Gastrocnemius medialis (tissue), 4 donors: ENCODE measurements at regions of chr7 and their contacts with region 1.

Region 1: DNA sequence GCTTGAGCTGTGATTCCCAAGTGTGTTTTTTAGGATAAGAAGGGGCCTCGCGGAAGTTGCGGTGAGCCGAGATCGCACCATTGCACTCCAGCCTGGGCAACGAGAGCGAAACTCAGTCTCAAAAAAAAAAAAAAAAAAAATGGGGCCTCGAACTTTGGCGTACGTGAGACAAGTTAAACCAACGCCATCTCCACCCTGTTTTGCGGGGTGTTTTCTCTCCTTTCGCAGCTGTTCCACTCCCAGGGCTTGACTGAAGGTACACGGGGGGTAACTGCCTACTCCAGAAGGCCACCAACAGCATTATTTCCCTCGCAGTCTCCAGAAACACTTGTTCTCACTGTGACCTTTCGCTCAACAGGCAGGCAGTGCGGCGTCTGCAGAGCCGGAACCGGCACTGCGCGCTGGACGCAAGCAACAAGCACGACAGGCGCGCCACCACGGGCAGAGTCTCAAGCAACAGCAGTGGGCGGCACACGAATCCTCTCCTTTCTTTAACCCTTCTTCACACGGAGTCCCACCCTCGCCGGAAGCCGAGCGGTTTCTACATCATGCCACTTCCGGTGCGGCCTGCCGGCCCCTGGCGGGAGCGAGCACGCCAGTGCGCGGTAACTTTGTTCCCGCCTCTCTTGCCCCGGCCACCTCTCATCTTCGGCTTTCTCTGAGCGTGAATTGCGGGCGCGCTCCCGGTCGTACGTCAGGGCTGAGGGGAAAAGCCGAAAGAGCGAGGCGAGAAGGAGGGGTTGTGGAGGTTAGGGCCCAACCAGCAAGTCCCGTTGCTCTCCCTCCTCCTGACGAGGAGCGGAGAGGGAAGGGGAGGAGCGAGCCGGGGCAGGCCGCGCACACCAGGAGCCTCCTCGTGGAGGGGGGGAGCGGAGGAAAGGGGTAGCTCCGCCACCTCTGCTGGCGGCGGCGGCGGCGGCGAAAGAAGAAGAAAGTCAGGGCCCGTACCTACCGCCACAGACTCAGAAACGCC is 814 bp upstream of the CDK13 start:
- DNase-seq: peak; percentile 99
- ATAC-seq: peak; percentile 86 to 90
- H3K4me3 ChIP-seq: peak overlapping the region; percentile 79 to 98 (median 87)
- H3K27ac ChIP-seq: peak overlapping the region; percentile 89 to 99 (median 94)
- H3K4me1 ChIP-seq: peaks cover 27 to 29% of the 10 kb centered on the region in 2 donors
- H3K27me3 ChIP-seq: no peaks in the 10 kb centered on the region
- CTCF ChIP-seq: no peak
- POLR2A ChIP-seq: peak; percentile 93 to 96

Region 2: DNA sequence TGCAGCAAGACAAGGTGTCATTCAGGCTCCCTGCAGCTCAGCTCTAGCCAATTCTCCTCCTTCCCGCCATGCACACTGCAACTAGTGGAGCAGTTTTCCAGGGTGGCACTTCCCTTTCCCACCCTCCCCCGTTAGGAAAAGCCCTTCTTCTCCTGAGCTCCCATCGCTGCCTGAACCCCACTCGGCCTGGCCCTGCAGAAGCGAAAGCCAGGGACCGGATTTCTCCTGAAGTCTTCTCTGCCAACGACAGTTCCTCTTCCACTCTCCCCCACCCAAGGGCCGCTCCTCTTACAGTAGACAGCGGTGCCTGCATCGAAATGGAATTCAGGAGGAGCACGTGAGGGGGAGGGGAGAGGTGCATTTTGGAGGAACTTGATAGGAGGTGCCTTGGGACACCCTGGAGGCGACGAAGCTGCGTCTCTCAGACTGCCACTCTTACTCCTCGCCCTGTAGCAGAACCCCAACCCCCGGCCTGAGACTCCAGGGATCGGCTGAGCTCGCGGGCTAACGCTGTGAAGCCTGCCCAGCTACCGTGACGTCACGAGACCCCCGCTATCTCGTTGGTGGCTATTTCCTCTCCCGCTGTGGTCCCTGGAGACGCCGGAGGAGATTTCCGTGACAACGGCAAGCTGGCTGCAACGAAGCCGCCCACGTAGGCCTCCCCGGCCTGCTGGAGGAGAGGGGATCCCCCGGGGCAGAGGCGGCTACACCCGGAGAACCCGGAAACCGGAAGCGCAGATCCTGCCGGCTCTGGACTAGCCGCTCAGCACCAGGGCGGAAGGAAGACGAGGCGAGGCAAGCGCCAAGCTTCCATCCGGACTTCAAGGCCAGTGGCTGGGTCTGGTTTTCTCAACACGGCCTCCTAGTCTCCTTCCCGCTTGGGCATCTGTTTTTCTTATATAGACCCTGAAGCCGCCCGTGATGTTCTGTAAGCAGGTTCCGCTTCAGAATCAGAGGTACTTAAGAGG is 216.1 kb before region 1 on chr7:
- in situ Hi-C with region 1: no loop called
- intact Hi-C with region 1: loop called (anchors 10 kb)
- DNase-seq: peak; percentile 82 to 84
- ATAC-seq: peak; percentile 94 to 97
- H3K4me3 ChIP-seq: peak overlapping the region; percentile 57 to 66 (median 64)
- H3K27ac ChIP-seq: peak overlapping the region; percentile 41 to 66 (median 55)
- H3K4me1 ChIP-seq: peaks cover 13 to 14% of the 10 kb centered on the region in 2 donors
- H3K27me3 ChIP-seq: no peaks in the 10 kb centered on the region
- CTCF ChIP-seq: no peak
- POLR2A ChIP-seq: no peak

Region 3: GRCh38 chr7:39894904-39895303 is 54.3 kb before region 1 on chr7:
- in situ Hi-C with region 1: no loop called
- intact Hi-C with region 1: loop called (anchors 1 kb)
- DNase-seq: no peak
- ATAC-seq: no peak
- H3K4me3 ChIP-seq: no peak overlapping the region
- H3K27ac ChIP-seq: no peak overlapping the region
- H3K4me1 ChIP-seq: peaks cover 0 to 3% of the 10 kb centered on the region in 2 donors
- H3K27me3 ChIP-seq: no peaks in the 10 kb centered on the region
- CTCF ChIP-seq: no peak
- POLR2A ChIP-seq: no peak

Region 4: DNA sequence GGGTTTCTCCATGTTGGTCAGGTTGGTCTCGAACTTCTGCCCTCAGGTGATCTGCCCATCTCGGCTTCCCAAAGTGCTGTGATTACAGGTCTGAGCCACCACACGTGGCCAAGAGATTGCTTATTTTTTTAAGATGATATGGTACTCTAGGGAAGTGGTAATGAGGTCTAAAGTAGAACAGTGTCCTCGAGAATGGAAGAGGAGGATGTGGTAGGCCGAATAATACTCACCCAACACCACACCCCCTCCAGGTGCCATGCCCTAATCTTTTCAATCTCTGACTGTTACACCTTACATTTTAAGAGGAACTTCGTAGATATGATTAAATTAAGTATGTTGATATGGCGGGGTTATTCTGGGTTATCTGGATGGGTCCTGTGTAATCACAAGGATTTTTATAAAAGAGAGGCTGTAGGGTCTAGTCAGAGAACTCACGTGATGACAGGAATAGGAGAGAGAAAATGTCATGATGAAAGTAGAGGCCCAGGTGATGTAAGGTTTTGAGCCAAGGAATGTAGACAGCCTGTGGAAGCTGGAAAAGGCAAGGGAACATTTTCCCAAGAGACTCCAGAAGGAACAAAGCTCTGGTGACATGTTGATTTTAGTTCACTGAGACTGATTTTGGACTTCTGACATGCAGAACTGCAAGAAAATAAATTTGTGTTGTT is 30.3 kb after region 1 on chr7:
- in situ Hi-C with region 1: no loop called
- intact Hi-C with region 1: loop called (anchors 5 kb)
- DNase-seq: no peak
- ATAC-seq: peak in 1 of 2 donors; percentile 68
- H3K4me3 ChIP-seq: no peak overlapping the region
- H3K27ac ChIP-seq: peak overlapping the region in 1 of 4 donors; percentile 25
- H3K4me1 ChIP-seq: peaks cover 51 to 57% of the 10 kb centered on the region in 2 donors
- H3K27me3 ChIP-seq: no peaks in the 10 kb centered on the region
- CTCF ChIP-seq: no peak
- POLR2A ChIP-seq: no peak

Region 5: DNA sequence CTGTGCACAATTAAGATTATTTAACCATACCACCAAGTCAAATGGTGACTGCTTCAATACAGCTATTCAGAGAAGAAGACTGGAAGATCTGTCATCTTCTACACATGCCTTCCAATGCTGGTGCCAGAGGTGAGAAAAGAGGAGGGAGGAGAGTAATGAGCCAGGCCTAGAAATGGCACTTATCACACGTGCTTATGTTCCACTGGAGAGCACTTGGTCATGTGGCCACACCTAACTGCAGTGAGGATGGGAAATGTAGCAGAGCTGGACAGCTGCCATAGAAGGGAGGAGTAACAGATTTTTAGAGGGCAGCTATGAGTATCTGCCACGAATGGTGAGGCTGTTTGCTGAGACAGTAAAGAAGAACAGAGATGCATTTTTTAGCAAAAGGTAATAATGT is 108.0 kb after region 1 on chr7:
- in situ Hi-C with region 1: loop called in 2 of 4 experiments (anchors 10 kb)
- intact Hi-C with region 1: loop called (anchors 1 kb)
- DNase-seq: no peak
- ATAC-seq: peak in 1 of 2 donors; percentile 47
- H3K4me3 ChIP-seq: no peak overlapping the region
- H3K27ac ChIP-seq: no peak overlapping the region
- H3K4me1 ChIP-seq: peaks cover 10 to 12% of the 10 kb centered on the region in 2 donors
- H3K27me3 ChIP-seq: no peaks in the 10 kb centered on the region
- CTCF ChIP-seq: no peak
- POLR2A ChIP-seq: no peak

Region 6: DNA sequence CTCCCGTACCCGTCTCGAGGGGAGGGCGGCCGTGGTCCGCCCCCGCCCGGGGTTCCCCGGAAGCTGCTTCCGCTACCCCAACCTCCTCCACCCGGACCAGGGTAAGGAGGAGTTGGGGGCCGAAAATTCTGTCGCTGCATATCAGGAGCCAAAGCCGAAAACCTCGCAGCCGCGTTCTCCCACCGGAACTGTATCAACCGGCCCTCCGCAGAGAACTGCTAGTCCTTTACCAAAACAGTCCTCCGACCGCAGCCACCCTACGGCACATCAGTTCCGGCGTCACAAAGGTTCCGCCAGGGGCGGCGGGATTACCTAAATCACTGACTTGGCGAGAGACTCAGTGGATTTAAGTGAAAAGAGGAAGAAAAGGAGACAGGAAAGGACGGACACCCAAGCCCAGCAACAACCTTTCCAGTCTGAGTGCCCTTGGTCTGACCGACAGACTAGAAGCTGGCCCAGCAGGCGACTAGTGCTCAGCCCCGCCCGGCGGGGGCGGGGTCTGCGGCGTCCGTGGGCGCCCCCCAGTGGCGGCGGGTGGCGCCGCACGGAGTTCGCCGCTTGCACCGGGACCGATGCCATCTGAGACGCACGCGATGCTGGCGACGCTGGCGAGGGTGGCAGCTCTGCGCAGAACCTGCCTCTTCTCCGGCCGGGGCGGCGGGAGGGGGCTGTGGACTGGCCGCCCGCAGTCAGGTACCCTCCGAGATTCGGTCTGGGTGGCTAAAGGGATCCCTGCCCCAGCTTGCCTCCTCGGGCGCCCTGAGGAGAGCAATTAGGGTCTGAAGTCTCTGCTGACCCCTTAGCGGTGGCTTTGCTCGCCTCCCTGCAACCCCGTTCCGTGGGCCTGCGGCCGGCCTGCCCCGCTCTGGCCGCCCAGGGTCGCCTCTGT is 185.4 kb after region 1 on chr7 and contains the starts of genes MPLKIP and SUGCT:
- in situ Hi-C with region 1: no loop called
- intact Hi-C with region 1: loop called (anchors 1 kb)
- DNase-seq: peak; percentile 76 to 79
- ATAC-seq: peak; percentile 93 to 94
- H3K4me3 ChIP-seq: peak within 1 kb of the TSS; percentile 81 to 98 (median 92)
- H3K27ac ChIP-seq: peak within 1 kb of the TSS; percentile 89 to 98 (median 92)
- H3K4me1 ChIP-seq: peaks cover 32 to 39% of the 10 kb centered on the region in 2 donors
- H3K27me3 ChIP-seq: no peaks in the 10 kb centered on the region
- CTCF ChIP-seq: peak; percentile 88 to 100 (median 96)
- POLR2A ChIP-seq: peak; percentile 56 to 74
- total RNA-seq, gene MPLKIP: 19.1 to 27.9 (median 23.8) TPM
- total RNA-seq, gene SUGCT: 2.3 to 3.5 (median 2.9) TPM